PC-9 (cell line): ENCODE measurements at regions of chr14 and their contacts with region 1.

Region 1: DNA sequence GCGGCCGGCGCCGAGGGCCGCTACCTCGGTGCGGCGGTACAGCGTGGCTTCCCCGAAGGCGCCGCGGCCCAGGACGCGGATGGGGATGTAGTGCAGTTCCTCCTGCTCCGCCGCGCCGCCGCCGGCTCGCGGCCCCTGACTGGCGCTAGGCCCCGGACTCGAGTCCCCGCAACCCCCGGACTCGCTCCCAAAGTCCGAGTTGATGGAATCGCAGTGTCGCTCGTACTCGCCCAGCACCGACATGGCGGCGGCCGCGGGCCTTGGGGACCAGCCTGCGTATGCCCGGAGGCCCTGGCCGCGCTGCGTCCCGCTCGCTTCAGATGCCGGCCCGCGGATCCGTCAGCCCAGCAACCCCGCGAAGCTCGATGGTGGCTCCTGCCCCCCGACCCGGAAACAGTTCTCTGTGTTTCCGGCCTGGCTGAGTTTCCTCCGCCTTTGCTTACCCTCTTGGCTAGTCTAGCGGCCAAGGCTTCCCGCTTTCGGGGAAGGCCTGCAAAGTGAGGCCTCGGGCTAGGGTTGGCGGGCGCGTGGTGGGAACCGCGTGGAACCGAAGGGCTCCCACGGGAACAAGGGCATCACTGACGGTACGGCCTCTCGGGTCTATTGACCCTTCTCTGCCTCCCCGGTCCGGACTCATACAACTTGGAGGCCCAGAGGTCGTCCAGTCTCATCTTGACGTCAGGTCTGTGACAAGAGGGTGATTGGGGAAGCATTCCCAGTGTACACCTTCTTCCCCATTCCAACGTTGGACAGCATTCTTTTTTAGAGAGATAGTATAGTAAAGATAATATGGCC is at the start of gene NEK9:
- DNase-seq: peak; percentile 88 to 98
- H3K4me3 ChIP-seq: peak within 1 kb of the TSS; percentile 64
- H3K27ac ChIP-seq: peak within 1 kb of the TSS; percentile 85
- H3K4me1 ChIP-seq: peaks cover 47% of the 10 kb centered on the region
- H3K27me3 ChIP-seq: no peaks in the 10 kb centered on the region
- CTCF ChIP-seq: no peak
- total RNA-seq, gene NEK9: 170 and 174 TPM in 2 replicates

Region 2: GRCh38 chr14:73269729-73270531 is 1856.9 kb before region 1 on chr14:
- CTCF ChIA-PET with region 1: no interaction called
- POLR2A ChIA-PET with region 1: no interaction called
- intact Hi-C with region 1: no loop called
- DNase-seq: peak in 1 of 2 experiments; percentile 52
- H3K4me3 ChIP-seq: peak overlapping the region; percentile 34; the same call in 1 of the 2 replicates
- H3K27ac ChIP-seq: no peak overlapping the region
- H3K4me1 ChIP-seq: no peaks in the 10 kb centered on the region
- H3K27me3 ChIP-seq: no peaks in the 10 kb centered on the region
- CTCF ChIP-seq: no peak

Region 3: DNA sequence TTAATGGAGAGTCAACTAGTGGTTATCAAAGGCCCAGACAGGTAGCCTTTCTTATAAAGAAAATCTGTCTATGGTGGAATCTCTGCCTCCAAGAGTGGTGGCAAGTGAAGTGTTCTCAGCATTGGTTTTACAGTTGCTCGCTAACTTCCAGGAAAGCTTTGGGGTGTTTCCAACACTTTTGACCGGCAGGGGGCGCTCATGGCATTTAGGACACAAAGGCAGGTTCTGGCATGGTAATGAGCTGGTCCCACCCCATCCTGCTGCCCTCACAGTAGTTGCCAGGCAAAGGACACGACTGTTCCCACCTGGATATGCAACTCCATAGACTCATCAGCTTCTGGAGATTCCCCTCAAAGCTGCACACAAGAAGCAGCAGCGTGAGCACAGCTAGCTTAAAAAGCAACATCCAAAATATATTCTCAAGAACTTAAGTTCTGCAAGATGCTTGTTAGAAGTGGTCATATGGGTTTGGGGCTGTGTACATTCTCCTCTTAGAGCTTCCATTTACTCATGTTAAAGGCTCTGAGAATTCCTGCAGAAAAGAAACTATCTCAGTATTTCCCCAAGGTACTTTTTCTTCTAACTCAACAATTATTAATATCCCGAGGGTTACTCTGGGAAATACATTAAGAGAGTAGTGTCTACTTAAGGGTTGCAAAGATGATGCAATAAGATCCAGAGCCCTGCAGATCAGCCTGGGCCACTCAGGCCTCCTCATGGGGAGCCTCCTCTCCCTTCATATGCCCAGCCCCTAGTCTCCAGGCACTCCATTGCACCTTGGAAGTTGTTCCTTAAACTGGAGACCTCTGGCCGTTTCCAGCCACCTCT is 265.8 kb before region 1 on chr14:
- CTCF ChIA-PET with region 1: interaction called, 10 read pairs
- POLR2A ChIA-PET with region 1: no interaction called
- intact Hi-C with region 1: loop called (anchors 1 kb)
- DNase-seq: peak; percentile 73 to 96
- H3K4me3 ChIP-seq: no peak overlapping the region
- H3K27ac ChIP-seq: no peak overlapping the region
- H3K4me1 ChIP-seq: peaks cover 5% of the 10 kb centered on the region; the same call in 1 of the 2 replicates
- H3K27me3 ChIP-seq: no peaks in the 10 kb centered on the region
- CTCF ChIP-seq: peak; percentile 99

Region 4: GRCh38 chr14:74980362-74981213 is 146.3 kb before region 1 on chr14:
- CTCF ChIA-PET with region 1: interaction called, 10 read pairs
- POLR2A ChIA-PET with region 1: no interaction called
- intact Hi-C with region 1: no loop called
- DNase-seq: no peak
- H3K4me3 ChIP-seq: no peak overlapping the region
- H3K27ac ChIP-seq: no peak overlapping the region
- H3K4me1 ChIP-seq: peaks cover 36% of the 10 kb centered on the region
- H3K27me3 ChIP-seq: no peaks in the 10 kb centered on the region
- CTCF ChIP-seq: no peak

Region 5: DNA sequence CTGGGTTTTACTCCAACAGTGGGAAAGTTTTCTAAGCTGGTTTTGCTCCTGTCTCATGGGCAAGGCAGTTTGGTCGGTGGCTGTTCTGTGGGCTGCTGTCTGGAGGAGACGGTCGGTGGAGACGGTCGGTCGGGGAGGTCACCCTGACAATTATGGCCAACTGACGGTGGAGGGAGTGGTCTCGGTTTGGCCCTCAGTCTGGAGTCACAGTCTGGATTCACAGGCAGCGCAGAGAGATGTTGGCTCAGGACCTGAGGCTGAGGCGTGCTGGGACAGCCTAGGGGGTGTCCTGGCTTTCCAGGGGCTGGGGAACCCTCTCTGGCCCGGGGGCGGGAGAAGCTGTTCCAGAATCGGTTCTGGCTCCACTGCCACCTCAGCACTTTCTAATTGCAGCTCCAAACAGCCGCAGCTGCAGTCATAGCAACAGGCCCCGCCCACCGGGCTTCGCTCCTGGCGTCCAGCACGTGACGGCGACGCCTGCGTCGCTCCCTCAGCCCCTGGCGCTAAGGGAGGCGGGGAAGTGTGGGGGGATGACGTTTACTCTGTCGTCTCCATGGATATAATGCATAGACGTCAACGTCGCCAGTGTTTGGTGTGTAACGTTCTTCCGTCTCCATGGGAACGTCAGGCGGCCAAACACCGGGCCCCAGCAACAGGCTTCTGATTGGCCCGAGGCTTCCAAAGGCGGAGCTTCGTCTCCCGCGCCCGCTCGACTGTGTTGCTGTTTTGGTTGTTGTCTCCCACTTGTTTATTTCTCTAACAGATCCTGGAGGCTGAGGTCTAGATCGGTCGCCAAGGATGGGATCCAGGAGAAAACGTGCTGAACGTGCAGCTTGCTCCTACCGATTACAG is 132.0 kb after region 1 on chr14:
- CTCF ChIA-PET with region 1: interaction called, 3 read pairs
- POLR2A ChIA-PET with region 1: interaction called, 4 read pairs
- intact Hi-C with region 1: loop called (anchors 1 kb)
- DNase-seq: peak; percentile 100
- H3K4me3 ChIP-seq: peak overlapping the region; percentile 56
- H3K27ac ChIP-seq: peak overlapping the region; percentile 83
- H3K4me1 ChIP-seq: peaks cover 63% of the 10 kb centered on the region
- H3K27me3 ChIP-seq: no peaks in the 10 kb centered on the region
- CTCF ChIP-seq: no peak

Region 6: DNA sequence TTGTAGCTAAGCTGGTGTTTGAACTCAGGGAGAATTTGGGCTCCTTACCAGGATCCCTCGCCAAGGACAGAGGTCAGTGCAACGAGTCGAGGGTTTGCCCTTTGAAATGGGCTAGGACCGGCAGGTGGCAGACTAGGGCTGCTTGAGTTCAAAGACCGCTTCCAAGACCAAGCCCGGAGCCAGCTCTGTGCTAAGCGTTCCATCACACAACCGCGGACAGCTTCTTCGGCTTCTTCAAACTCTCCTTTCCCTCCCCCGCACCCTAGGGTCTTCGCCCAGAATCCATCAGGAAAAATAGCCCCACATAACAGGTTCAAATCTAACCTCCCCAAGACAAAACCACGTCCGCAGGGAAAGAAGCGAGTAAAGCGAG is 450.8 kb after region 1 on chr14:
- CTCF ChIA-PET with region 1: no interaction called
- POLR2A ChIA-PET with region 1: no interaction called
- intact Hi-C with region 1: loop called (anchors 5 kb)
- DNase-seq: peak; percentile 83 to 93
- H3K4me3 ChIP-seq: peak overlapping the region; percentile 67
- H3K27ac ChIP-seq: peak overlapping the region; percentile 24
- H3K4me1 ChIP-seq: peaks cover 32% of the 10 kb centered on the region
- H3K27me3 ChIP-seq: no peaks in the 10 kb centered on the region
- CTCF ChIP-seq: peak; percentile 97

Region 7: DNA sequence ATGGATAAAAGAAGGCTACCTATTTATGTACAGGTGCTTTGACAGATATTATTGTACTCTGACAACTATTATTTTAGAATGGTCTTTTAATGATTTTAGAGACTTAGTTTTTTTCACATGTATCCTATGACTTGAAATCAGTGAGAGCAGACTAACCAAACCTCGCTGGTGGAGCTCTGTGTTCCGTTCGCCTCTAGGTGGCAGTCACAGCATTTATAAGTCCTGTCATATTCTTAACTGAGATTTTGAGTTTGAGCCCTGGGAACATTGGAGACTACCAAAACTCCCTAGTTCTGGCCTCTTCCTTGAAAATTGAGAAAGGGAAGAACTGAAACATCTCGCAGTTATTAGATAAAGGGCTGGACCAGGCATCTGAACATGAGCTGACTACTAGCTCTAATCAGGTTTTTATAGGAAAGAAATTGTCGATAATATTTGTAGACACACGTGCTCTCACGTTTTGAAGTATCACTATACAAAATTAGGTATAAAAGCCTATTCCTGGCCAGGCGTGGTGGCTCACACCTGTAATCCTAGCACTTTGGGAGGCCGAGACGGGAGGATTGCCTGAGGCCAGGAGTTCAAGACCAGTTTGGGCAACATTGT is 582.4 kb after region 1 on chr14:
- CTCF ChIA-PET with region 1: no interaction called
- POLR2A ChIA-PET with region 1: interaction called, 14 read pairs
- intact Hi-C with region 1: no loop called
- DNase-seq: peak; percentile 49 to 58
- H3K4me3 ChIP-seq: no peak overlapping the region
- H3K27ac ChIP-seq: no peak overlapping the region
- H3K4me1 ChIP-seq: peaks cover 30% of the 10 kb centered on the region
- H3K27me3 ChIP-seq: no peaks in the 10 kb centered on the region
- CTCF ChIP-seq: peak; percentile 87

Region 8: GRCh38 chr14:76386915-76387782 is 1260.3 kb after region 1 on chr14:
- CTCF ChIA-PET with region 1: no interaction called
- POLR2A ChIA-PET with region 1: no interaction called
- intact Hi-C with region 1: loop called (anchors 10 kb)
- DNase-seq: peak; percentile 55 to 87
- H3K4me3 ChIP-seq: no peak overlapping the region
- H3K27ac ChIP-seq: no peak overlapping the region
- H3K4me1 ChIP-seq: no peaks in the 10 kb centered on the region
- H3K27me3 ChIP-seq: peaks cover 97% of the 10 kb centered on the region
- CTCF ChIP-seq: peak; percentile 100